K562 (cell line): ENCODE measurements at regions of chr12 and their contacts with region 1.

Region 1: GRCh38 chr12:108457006-108457733 is 57.9 kb upstream of the FICD start:
- DNase-seq: peak; percentile 63 to 75 (median 70)
- ATAC-seq: peak; percentile 99
- H3K4me3 ChIP-seq: no peak overlapping the region
- H3K27ac ChIP-seq: no peak overlapping the region
- H3K4me1 ChIP-seq: no peaks in the 10 kb centered on the region; a peak in 1 of 5 replicates
- H3K27me3 ChIP-seq: peaks cover 5 to 6% of the 10 kb centered on the region in 2 experiments
- CTCF ChIP-seq: peak; percentile 74 to 92 (median 88)
- EP300 ChIP-seq: no peak
- POLR2A ChIP-seq: no peak
- RAD21 ChIP-seq: peak; percentile 70 to 81

Region 2: DNA sequence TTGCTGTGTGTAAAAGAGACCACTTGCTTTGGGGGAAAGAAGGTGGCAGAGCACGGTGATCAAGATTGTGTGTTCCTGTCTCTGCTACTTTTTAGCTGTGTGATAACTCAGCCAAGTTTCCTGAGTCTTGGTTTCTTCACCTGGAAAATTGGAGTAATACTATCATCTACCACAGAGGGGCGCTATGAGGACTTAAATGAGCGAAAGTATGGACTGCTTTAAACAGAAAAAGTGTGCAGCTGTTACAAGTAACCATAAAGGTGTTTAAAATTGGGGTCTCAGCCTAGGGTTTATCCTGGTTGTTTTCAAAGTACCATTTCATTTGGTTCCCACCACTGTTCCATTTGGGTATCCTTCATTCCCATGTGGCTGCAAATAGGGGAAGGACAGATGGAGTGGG is 394.0 kb before region 1 on chr12:
- CTCF ChIA-PET with region 1: interaction called, 7 read pairs
- POLR2A ChIA-PET with region 1: no interaction called
- in situ Hi-C with region 1: no loop called
- intact Hi-C with region 1: loop called (anchors 10 kb)
- DNase-seq: peak; percentile 39 to 66 (median 45)
- ATAC-seq: peak; percentile 78
- H3K4me3 ChIP-seq: no peak overlapping the region
- H3K27ac ChIP-seq: no peak overlapping the region
- H3K4me1 ChIP-seq: no peaks in the 10 kb centered on the region
- H3K27me3 ChIP-seq: peaks cover 0 to 3% of the 10 kb centered on the region in 2 experiments; a peak in 2 of 5 replicates
- CTCF ChIP-seq: peak; percentile 67 to 82 (median 80); a peak in 5 of 6 replicates
- EP300 ChIP-seq: no peak
- POLR2A ChIP-seq: no peak
- RAD21 ChIP-seq: peak; percentile 65 to 86

Region 3: GRCh38 chr12:108234158-108234557 is 223.0 kb before region 1 on chr12:
- CTCF ChIA-PET with region 1: no interaction called
- POLR2A ChIA-PET with region 1: no interaction called
- in situ Hi-C with region 1: no loop called
- intact Hi-C with region 1: loop called (anchors 10 kb)
- DNase-seq: peak in 1 of 4 experiments; percentile 11
- ATAC-seq: 0 out of 3 replicates have a peak, but pooled peaks have one; percentile 32
- H3K4me3 ChIP-seq: no peak overlapping the region
- H3K27ac ChIP-seq: no peak overlapping the region
- H3K4me1 ChIP-seq: no peaks in the 10 kb centered on the region
- H3K27me3 ChIP-seq: no peaks in the 10 kb centered on the region
- CTCF ChIP-seq: peak in 2 of 3 experiments; percentile 31; a peak in 3 of 6 replicates
- EP300 ChIP-seq: no peak
- POLR2A ChIP-seq: no peak
- RAD21 ChIP-seq: peak; percentile 18 to 26; a peak in 2 of 4 replicates

Region 4: GRCh38 chr12:108337235-108338223 is 119.6 kb before region 1 on chr12:
- CTCF ChIA-PET with region 1: no interaction called
- POLR2A ChIA-PET with region 1: no interaction called
- in situ Hi-C with region 1: no loop called
- intact Hi-C with region 1: loop called (anchors 10 kb)
- DNase-seq: peak; percentile 88 to 96 (median 92)
- ATAC-seq: peak; percentile 96
- H3K4me3 ChIP-seq: no peak overlapping the region
- H3K27ac ChIP-seq: peak overlapping the region; percentile 69
- H3K4me1 ChIP-seq: peaks cover 29 to 38% of the 10 kb centered on the region in 2 experiments; a peak in 4 of 5 replicates
- H3K27me3 ChIP-seq: no peaks in the 10 kb centered on the region
- CTCF ChIP-seq: peak; percentile 68 to 88 (median 82)
- EP300 ChIP-seq: peak; percentile 90; the same call in 1 of the 2 replicates
- POLR2A ChIP-seq: peak; percentile 55; the same call in 1 of the 2 replicates
- RAD21 ChIP-seq: peak; percentile 16 to 56; a peak in 3 of 4 replicates